CD4-positive, alpha-beta memory T cell (primary cell): ENCODE measurements at regions of chr6 and their contacts with region 1.

Region 1: DNA sequence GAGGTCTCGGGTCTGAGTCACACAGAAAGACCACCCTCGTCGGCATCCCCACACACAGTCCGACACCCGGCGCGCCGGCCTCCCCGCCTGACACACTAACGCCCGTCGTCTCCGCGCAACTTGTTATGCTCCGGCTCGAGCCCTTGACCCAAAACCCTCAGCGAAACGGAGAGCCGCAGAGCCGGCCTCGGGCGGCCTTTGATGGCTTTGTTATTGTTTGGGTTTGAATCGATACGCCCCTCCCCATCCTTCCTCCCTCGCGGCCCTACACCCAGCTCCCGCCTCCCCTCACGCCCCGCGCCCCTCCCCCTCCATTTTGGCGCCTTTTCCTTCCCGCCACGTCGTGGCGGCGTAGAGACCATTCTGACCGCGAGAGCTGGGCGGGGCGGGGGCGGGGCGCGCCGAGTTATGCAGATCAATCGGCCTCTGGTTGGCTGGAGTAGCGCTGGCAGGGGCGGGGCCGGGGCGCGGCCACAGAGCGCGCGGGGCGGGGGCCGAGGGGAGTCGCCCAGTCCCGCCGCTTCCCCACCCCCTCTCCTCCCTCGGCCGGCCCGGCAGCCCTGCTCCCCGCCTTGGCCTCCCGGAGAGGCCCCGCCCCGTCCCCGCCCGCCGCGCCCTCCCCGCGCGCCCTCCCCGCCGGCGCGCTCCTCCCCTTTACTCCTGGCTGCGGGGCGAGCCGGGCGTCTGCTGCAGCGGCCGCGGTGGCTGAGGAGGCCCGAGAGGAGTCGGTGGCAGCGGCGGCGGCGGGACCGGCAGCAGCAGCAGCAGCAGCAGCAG is at the start of gene PIM1:
- DNase-seq: peak; percentile 94 to 98 (median 95)
- H3K4me3 ChIP-seq: peak within 1 kb of the TSS; percentile 76 to 97
- H3K4me3 Mint-ChIP-seq: peak within 1 kb of the TSS; percentile 93 to 99 (median 94)
- H3K27ac ChIP-seq: peak within 1 kb of the TSS; percentile 74
- H3K27ac Mint-ChIP-seq: peak within 1 kb of the TSS; percentile 94 to 98 (median 96)
- H3K4me1 ChIP-seq: peaks cover 36% of the 10 kb centered on the region
- H3K4me1 Mint-ChIP-seq: peaks cover 23 to 54% (median 29%) of the 10 kb centered on the region in 4 donors
- H3K27me3 ChIP-seq: no peaks in the 10 kb centered on the region
- H3K27me3 Mint-ChIP-seq: no peaks in the 10 kb centered on the region
- total RNA-seq, gene PIM1: 124 to 125 TPM

Region 2: DNA sequence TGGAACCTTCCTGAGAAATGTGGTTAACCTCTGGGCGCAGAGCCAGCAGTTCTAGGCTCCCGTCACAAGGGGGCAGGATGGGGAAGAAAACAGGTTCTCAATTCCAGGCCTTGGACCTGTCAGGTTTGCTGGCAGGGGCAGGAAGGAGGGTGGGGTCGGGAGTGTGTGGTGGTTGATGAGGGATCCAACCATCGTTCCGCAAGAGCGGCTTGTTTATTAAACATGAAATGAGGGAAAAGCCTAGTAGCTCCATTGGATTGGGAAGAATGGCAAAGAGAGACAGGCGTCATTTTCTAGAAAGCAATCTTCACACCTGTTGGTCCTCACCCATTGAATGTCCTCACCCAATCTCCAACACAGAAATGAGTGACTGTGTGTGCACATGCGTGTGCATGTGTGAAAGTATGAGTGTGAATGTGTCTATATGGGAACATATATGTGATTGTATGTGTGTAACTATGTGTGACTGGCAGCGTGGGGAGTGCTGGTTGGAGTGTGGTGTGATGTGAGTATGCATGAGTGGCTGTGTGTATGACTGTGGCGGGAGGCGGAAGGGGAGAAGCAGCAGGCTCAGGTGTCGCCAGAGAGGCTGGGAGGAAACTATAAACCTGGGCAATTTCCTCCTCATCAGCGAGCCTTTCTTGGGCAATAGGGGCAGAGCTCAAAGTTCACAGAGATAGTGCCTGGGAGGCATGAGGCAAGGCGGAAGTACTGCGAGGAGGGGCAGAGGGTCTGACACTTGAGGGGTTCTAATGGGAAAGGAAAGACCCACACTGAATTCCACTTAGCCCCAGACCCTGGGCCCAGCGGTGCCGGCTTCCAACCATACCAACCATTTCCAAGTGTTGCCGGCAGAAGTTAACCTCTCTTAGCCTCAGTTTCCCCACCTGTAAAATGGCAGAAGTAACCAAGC is 545.9 kb before region 1 on chr6:
- CTCF ChIA-PET with region 1: no interaction called
- POLR2A ChIA-PET with region 1: no interaction called
- intact Hi-C with region 1: no loop called
- DNase-seq: peak; percentile 65 to 78 (median 73)
- H3K4me3 ChIP-seq: no peak overlapping the region
- H3K4me3 Mint-ChIP-seq: no peak overlapping the region
- H3K27ac ChIP-seq: no peak overlapping the region
- H3K27ac Mint-ChIP-seq: peak overlapping the region; percentile 32 to 82 (median 69)
- H3K4me1 ChIP-seq: peaks cover 9% of the 10 kb centered on the region
- H3K4me1 Mint-ChIP-seq: peaks cover 5 to 16% (median 9%) of the 10 kb centered on the region in 4 donors
- H3K27me3 ChIP-seq: no peaks in the 10 kb centered on the region
- H3K27me3 Mint-ChIP-seq: no peaks in the 10 kb centered on the region

Region 3: GRCh38 chr6:36765594-36766398 is 403.9 kb before region 1 on chr6:
- CTCF ChIA-PET with region 1: interaction called, 4 read pairs
- POLR2A ChIA-PET with region 1: no interaction called
- intact Hi-C with region 1: loop called (anchors 2 kb)
- DNase-seq: peak; percentile 75 to 80 (median 78)
- H3K4me3 ChIP-seq: no peak overlapping the region
- H3K4me3 Mint-ChIP-seq: peak overlapping the region in 2 of 8 donors; percentile 11 to 28
- H3K27ac ChIP-seq: no peak overlapping the region
- H3K27ac Mint-ChIP-seq: peak overlapping the region in 5 of 7 donors; percentile 11 to 66 (median 50)
- H3K4me1 ChIP-seq: peaks cover 45% of the 10 kb centered on the region
- H3K4me1 Mint-ChIP-seq: peaks cover 27 to 37% (median 31%) of the 10 kb centered on the region in 4 donors
- H3K27me3 ChIP-seq: no peaks in the 10 kb centered on the region
- H3K27me3 Mint-ChIP-seq: no peaks in the 10 kb centered on the region

Region 4: DNA sequence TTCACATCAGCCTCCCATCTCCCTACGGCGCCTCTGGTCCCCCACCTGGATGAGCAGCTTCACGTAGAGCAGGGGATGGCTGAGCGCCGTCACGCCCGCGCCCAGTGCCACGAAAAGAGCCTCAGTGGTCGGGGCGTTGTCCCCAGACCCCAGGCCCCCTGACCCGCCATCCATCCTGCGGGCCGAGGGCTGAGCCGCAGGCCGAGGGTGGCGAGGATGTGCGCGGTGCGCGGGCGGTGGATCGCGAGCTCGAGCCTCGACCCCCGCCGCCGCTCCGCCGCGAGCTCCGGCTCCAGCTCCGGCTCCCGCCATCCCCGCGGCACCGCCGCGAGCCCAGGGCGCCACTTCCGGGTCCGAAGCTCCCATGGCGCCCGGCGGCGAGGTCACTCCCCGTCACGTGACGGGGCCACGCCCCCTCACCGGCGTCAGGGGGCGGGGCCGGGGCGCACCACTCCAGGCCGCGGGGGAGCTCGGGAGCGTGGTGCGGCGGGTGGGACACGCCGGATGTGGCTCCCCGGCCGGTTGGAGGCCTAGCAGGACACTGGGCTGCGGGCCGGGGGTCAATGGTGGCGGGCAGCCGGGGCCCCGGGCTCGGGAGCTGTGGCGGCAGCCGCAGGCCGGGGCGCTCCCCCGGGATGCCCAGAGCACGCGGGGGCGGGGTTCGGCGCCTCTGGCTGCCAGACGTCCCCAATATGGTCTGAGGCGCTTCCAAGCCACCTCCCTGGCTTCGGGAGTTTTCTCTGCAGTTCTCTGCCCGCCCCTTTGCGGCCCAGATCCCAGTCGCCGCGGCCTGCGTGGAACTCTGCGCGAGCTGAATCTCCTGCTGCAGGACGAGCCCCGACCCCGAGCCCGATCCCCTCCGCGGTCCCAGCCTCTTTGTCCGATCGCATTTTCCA is 183.6 kb before region 1 on chr6 and contains the start of gene MTCH1:
- CTCF ChIA-PET with region 1: interaction called, 3 read pairs
- POLR2A ChIA-PET with region 1: interaction called, 18 read pairs
- intact Hi-C with region 1: loop called (anchors 1 kb)
- DNase-seq: peak; percentile 89 to 95 (median 90)
- H3K4me3 ChIP-seq: peak within 1 kb of the TSS; percentile 82 to 93
- H3K4me3 Mint-ChIP-seq: peak within 1 kb of the TSS; percentile 93 to 99 (median 96)
- H3K27ac ChIP-seq: peak within 1 kb of the TSS; percentile 94
- H3K27ac Mint-ChIP-seq: peak within 1 kb of the TSS in 6 of 7 donors; percentile 92 to 98 (median 98)
- H3K4me1 ChIP-seq: peaks cover 41% of the 10 kb centered on the region
- H3K4me1 Mint-ChIP-seq: peaks cover 14 to 30% (median 16%) of the 10 kb centered on the region in 4 donors
- H3K27me3 ChIP-seq: no peaks in the 10 kb centered on the region
- H3K27me3 Mint-ChIP-seq: peaks cover 0 to 2% of the 10 kb centered on the region in 2 donors
- total RNA-seq, gene MTCH1: 142 to 151 TPM

Region 5: GRCh38 chr6:37051138-37052026 is 118.3 kb before region 1 on chr6:
- CTCF ChIA-PET with region 1: interaction called, 285 read pairs
- POLR2A ChIA-PET with region 1: interaction called, 386 read pairs
- intact Hi-C with region 1: loop called (anchors 1 kb)
- DNase-seq: peak; percentile 84 to 91 (median 84)
- H3K4me3 ChIP-seq: no peak overlapping the region
- H3K4me3 Mint-ChIP-seq: peak overlapping the region; percentile 38 to 92 (median 68)
- H3K27ac ChIP-seq: peak overlapping the region; percentile 72
- H3K27ac Mint-ChIP-seq: peak overlapping the region; percentile 31 to 94 (median 92)
- H3K4me1 ChIP-seq: peaks cover 60% of the 10 kb centered on the region
- H3K4me1 Mint-ChIP-seq: peaks cover 50 to 62% (median 55%) of the 10 kb centered on the region in 4 donors
- H3K27me3 ChIP-seq: no peaks in the 10 kb centered on the region
- H3K27me3 Mint-ChIP-seq: no peaks in the 10 kb centered on the region

Region 6: DNA sequence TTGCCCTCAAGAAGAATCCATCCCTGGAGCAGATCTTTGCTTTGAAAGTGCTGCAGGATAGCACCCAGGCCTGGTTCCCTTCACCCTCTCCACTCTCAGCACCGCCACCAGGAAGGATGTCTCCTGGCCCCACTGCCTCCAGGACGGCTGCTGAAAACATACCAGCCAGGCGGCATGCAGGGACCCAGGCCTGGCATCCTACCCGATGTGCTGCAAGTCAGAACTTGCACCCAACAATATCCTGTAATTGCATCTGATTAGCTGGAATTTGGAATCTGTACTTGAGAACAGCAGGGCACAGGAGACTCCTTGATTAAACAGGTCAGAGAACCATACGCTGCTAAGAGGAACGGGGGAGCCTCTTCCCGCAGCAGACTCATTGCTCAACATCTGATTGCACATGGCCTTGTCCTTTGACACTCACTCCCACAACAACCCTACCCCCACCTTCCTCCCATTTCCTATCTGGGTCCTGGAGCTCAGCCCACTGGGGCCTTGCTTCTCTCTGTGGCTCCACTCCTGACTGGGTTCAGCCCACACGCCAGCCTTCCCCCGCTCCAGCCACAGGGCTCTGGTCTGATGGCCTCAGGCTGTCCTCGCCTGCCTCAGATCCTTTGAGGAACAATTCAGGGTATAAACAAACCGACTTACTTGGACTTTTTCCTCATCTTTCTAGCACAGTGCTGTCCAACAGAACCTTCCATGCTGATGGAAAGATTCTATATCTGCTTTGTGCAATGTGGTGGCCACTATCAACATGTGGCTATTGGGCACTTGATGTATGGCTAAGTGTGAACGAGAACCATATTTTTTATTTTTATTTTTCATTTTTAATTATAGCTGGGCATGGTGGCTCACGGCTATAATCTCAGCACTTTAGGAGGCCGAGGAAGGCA is 86.2 kb before region 1 on chr6:
- CTCF ChIA-PET with region 1: no interaction called
- POLR2A ChIA-PET with region 1: no interaction called
- intact Hi-C with region 1: no loop called
- DNase-seq: no peak
- H3K4me3 ChIP-seq: no peak overlapping the region
- H3K4me3 Mint-ChIP-seq: no peak overlapping the region
- H3K27ac ChIP-seq: no peak overlapping the region
- H3K27ac Mint-ChIP-seq: peak overlapping the region in 2 of 7 donors; percentile 29 to 42
- H3K4me1 ChIP-seq: no peaks in the 10 kb centered on the region
- H3K4me1 Mint-ChIP-seq: peaks cover 0 to 4% (median 0%) of the 10 kb centered on the region in 4 donors
- H3K27me3 ChIP-seq: no peaks in the 10 kb centered on the region
- H3K27me3 Mint-ChIP-seq: no peaks in the 10 kb centered on the region

Region 7: DNA sequence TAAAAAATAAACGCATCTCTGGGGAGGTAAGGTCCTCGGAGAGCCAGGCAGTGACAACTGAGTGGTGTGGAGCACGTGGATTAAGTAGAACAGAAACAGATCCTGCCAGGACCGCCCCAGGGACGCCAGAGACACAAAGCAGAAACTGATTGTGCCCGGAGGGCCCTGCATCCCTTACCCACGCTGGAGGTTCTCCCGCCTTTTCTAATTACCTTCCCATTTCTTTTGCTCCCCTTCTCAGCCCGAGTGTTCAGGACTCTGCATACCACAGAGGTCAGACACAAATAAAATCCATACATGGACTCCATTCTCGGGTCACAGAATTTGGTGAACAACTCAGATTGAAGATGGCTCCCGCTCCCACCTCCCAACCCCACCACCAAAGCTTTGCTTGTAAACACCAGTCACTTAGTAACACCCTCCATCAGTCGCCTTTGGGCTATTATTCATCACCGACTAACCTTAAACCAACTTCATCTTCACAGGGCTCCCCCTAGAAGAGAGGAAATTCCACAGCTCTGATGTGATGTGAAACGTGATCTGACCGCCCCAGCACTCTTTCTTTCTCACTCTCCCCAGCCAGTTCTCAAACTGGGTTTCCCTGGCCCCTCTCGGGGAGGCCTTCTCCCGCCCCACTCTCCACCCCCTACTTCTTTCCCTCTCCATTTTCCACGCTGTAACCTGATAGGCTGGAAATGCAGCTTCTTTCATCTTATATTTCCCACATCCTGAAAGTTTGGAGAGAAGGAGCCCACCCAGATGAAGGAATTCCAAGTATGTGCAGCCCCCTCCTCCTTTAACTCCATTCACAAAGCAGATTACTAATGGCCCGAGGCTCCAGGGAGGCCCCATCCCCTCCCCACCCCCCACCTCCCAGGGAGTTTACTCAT is 32.2 kb before region 1 on chr6:
- CTCF ChIA-PET with region 1: interaction called, 18 read pairs
- POLR2A ChIA-PET with region 1: interaction called, 59 read pairs
- intact Hi-C with region 1: loop called (anchors 1 kb)
- DNase-seq: peak in 4 of 5 donors; percentile 24 to 64 (median 28)
- H3K4me3 ChIP-seq: no peak overlapping the region
- H3K4me3 Mint-ChIP-seq: peak overlapping the region in 7 of 8 donors; percentile 44 to 71 (median 58)
- H3K27ac ChIP-seq: no peak overlapping the region
- H3K27ac Mint-ChIP-seq: peak overlapping the region in 6 of 7 donors; percentile 70 to 95 (median 78)
- H3K4me1 ChIP-seq: peaks cover 53% of the 10 kb centered on the region
- H3K4me1 Mint-ChIP-seq: peaks cover 22 to 57% (median 47%) of the 10 kb centered on the region in 4 donors
- H3K27me3 ChIP-seq: no peaks in the 10 kb centered on the region
- H3K27me3 Mint-ChIP-seq: no peaks in the 10 kb centered on the region

Region 8: GRCh38 chr6:37182736-37183590 is 13.3 kb after region 1 on chr6:
- CTCF ChIA-PET with region 1: interaction called, 45 read pairs
- POLR2A ChIA-PET with region 1: interaction called, 93 read pairs
- intact Hi-C with region 1: loop called (anchors 1 kb)
- DNase-seq: peak; percentile 70 to 79 (median 74)
- H3K4me3 ChIP-seq: peak overlapping the region; percentile 14 to 21
- H3K4me3 Mint-ChIP-seq: peak overlapping the region in 7 of 8 donors; percentile 55 to 77 (median 71)
- H3K27ac ChIP-seq: peak overlapping the region; percentile 52
- H3K27ac Mint-ChIP-seq: peak overlapping the region; percentile 79 to 94 (median 89)
- H3K4me1 ChIP-seq: peaks cover 86% of the 10 kb centered on the region
- H3K4me1 Mint-ChIP-seq: peaks cover 33 to 70% (median 47%) of the 10 kb centered on the region in 4 donors
- H3K27me3 ChIP-seq: no peaks in the 10 kb centered on the region
- H3K27me3 Mint-ChIP-seq: no peaks in the 10 kb centered on the region

Region 9: DNA sequence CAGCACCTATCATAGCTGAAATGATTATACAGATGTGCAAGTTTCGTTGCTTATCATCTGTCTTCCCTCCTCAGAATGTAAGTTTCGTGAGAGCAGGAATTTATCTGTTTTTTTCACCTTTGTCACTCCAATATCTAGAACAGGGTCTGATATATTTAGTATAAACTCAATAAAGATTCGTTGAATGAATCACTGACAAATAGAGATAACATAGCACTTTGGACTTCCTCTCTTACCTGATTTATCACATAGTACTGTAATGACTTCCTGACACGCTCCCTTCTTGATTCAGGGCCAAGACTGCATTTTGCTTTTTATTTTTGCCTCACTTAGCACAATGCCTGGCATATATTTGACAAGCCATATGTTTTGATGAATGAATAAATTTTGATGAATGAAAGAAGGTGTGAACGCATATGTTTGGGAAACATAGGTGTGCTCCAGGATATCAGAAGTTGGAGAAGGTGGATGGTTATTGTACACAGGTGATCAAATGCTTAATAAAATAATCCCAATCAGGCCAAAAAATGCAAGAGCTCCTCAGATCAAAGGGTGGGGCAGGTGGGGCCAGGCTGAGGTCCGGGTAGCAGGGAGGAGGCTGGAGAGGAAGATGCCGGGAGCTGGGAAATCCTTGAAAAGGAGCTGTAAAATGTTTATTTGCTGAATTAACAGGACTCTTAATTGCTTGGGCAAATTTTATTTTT is 33.3 kb after region 1 on chr6:
- CTCF ChIA-PET with region 1: interaction called, 315 read pairs
- POLR2A ChIA-PET with region 1: interaction called, 129 read pairs
- intact Hi-C with region 1: no loop called
- DNase-seq: peak in 1 of 5 donors; percentile 10
- H3K4me3 ChIP-seq: no peak overlapping the region
- H3K4me3 Mint-ChIP-seq: peak overlapping the region in 6 of 8 donors; percentile 50 to 65 (median 60)
- H3K27ac ChIP-seq: no peak overlapping the region
- H3K27ac Mint-ChIP-seq: peak overlapping the region; percentile 53 to 90 (median 84)
- H3K4me1 ChIP-seq: peaks cover 36% of the 10 kb centered on the region
- H3K4me1 Mint-ChIP-seq: peaks cover 31 to 57% (median 43%) of the 10 kb centered on the region in 4 donors
- H3K27me3 ChIP-seq: no peaks in the 10 kb centered on the region
- H3K27me3 Mint-ChIP-seq: no peaks in the 10 kb centered on the region